ENCODE measurements at regions of chr12 and their contacts with region 1.

Region 1: GRCh38 chr12:116599285-116600136 is 40.3 kb downstream of the MAP1LC3B2 start:
- DNase-seq: peak; percentile 87 to 96
- ATAC-seq: peak; percentile 90
- H3K4me3 ChIP-seq: peak overlapping the region in 1 of 2 donors; percentile 3
- H3K27ac ChIP-seq: peak overlapping the region in 1 of 2 donors; percentile 15
- H3K4me1 ChIP-seq: peaks cover 0 to 2% of the 10 kb centered on the region in 2 donors
- H3K27me3 ChIP-seq: no peaks in the 10 kb centered on the region

Region 2: DNA sequence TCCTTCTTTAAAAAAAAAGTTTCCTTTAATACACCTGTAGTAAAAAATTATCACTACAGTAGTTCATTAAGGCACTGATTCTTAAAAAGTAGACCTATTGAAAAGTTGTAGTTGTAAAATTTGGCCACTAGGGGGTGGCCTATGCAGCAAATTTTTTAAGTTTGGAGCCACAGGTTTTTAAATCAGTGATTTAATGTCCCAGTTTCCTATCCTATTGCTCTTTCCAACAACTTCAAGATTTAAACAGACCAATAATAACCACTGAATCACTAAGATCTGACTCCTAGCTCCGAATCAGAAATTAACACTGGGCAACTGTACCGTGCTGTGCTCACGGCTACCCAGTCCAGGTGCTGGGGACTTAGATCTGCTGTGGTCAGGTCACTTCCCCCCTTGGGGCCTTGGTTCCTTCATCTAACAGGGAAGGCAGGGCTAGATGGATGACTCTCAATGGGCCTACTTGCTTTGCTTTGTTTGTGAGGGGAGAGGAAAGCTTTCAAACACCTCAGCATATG is 601.3 kb before region 1 on chr12:
- intact Hi-C with region 1: loop called (anchors 5 kb)
- DNase-seq: no peak
- ATAC-seq: peak; percentile 75
- H3K4me3 ChIP-seq: no peak overlapping the region
- H3K27ac ChIP-seq: peak overlapping the region in 1 of 2 donors; percentile 59
- H3K4me1 ChIP-seq: peaks cover 0 to 2% of the 10 kb centered on the region in 2 donors
- H3K27me3 ChIP-seq: no peaks in the 10 kb centered on the region

Region 3: GRCh38 chr12:116015525-116015924 is 584.0 kb before region 1 on chr12:
- intact Hi-C with region 1: loop called (anchors 5 kb)
- DNase-seq: no peak
- ATAC-seq: no peak
- H3K4me3 ChIP-seq: no peak overlapping the region
- H3K27ac ChIP-seq: no peak overlapping the region
- H3K4me1 ChIP-seq: peaks cover 0 to 1% of the 10 kb centered on the region in 2 donors
- H3K27me3 ChIP-seq: no peaks in the 10 kb centered on the region

Region 4: GRCh38 chr12:116277393-116278278 is 321.9 kb before region 1 on chr12 and contains the start of gene MED13L:
- intact Hi-C with region 1: loop called (anchors 2 to 5 kb)
- DNase-seq: peak; percentile 93 to 96
- ATAC-seq: peak; percentile 94
- H3K4me3 ChIP-seq: peak within 1 kb of the TSS; percentile 94 to 98
- H3K27ac ChIP-seq: peak within 1 kb of the TSS; percentile 86 to 94
- H3K4me1 ChIP-seq: no peaks in the 10 kb centered on the region
- H3K27me3 ChIP-seq: no peaks in the 10 kb centered on the region
- total RNA-seq, gene MED13L: 198 to 215 TPM

Region 5: DNA sequence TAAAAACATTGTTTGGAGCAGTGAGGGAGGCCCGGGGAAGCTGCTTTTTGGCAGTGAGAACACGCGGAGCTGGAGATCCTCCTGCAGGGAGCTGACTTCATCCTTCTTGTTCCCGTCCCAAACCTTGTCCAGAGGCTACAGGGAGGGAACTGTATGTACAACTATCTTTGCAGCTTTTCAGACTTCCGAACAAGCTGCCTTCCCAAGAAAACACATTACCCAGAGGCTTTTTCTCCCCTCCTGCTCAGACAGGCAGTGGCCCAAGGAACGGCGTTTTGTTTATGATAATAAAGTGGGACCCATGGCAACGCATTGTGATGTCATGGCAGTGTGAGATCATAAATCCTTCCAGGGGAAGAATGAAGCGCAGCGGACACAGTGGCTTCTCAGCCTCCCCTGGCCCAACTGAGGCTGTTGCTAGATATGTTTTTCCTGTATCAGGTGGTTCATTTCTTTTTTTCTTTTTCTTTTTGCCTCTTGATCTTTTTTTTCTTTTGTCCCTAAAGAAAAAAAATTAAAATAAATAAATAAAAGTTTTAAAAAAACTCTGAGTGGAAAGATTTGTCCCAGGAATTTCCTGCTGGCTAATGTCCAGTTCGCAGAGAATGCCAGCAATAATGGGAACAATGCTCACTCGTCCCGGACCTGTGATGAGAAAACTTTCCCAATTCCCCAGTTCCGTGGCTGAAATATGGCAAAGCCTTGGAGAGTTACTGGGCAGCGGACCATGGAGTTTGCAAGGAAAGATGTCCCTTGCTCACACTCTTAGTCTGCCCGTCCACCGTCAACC is 143.8 kb before region 1 on chr12:
- intact Hi-C with region 1: loop called in 1 of 2 experiments (anchors 10 kb)
- DNase-seq: peak; percentile 89
- ATAC-seq: peak; percentile 92
- H3K4me3 ChIP-seq: no peak overlapping the region
- H3K27ac ChIP-seq: peak overlapping the region; percentile 64 to 96
- H3K4me1 ChIP-seq: peaks cover 0 to 2% of the 10 kb centered on the region in 2 donors
- H3K27me3 ChIP-seq: no peaks in the 10 kb centered on the region

Region 6: GRCh38 chr12:116539905-116540482 is 59.5 kb before region 1 on chr12:
- intact Hi-C with region 1: loop called in 1 of 2 experiments (anchors 5 kb)
- DNase-seq: peak in 1 of 2 donors; percentile 60
- ATAC-seq: no peak
- H3K4me3 ChIP-seq: no peak overlapping the region
- H3K27ac ChIP-seq: no peak overlapping the region
- H3K4me1 ChIP-seq: no peaks in the 10 kb centered on the region
- H3K27me3 ChIP-seq: no peaks in the 10 kb centered on the region

Measured in aorta (tissue), 5 donors.